Cardiac septum (tissue), 1 donor: ENCODE measurements at regions of chr3 and their contacts with region 1.

Region 1: DNA sequence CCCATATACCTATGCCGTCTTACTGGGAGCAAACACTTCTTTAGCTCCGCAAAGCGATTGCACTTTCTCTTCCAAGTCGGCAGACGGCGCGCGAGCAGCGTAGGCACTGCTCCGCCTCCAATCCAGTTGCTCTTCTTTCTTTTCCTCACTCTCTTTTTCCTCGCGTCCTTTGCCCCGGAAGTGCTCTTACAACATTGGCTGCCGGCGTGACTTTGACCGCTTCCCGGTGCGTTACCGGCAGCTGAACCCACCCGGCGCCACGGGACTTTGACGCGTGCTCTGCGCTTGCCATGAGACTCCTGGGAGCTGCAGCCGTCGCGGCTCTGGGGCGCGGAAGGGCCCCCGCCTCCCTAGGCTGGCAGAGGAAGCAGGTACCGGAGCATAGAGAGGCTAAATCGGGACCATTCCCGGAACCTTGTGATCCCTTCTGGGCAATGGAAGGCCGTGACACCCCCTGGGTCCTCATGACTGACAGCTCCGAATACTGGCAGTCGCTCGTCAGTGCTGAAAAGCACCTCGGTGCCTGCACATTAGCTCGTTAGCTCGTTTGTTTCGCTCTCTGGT is at the start of gene GFM1:
- DNase-seq: peak; percentile 95
- total RNA-seq, gene GFM1: 58.4 TPM

Region 2: DNA sequence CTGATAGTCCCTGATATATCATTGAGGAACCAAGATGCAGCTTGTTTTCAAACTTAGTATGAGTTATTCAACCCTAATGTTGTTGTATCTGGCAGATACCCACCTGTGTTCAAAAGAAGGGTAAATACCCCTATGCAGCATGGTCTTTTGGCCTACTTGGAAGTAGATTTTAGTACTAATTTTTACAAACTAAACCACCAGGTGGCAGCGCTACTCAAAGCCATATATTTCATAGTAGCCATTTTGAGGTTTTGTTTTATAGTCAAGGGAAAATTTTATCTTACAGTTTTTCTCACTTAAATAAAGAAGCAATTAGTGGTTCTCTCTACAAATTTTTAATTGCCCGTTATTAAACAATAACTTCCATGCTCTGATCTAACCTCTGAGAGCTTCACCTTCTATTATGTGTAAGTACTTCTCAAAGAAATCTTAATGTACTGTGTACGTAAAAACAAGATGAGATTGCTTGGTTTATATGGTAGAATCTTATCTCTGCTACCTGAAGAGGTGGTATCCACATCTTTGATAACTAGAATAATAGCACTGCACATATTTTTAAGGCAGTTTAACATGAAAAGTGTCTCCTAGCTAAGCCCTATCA is 104.9 kb before region 1 on chr3:
- intact Hi-C with region 1: loop called (anchors 10 kb)
- DNase-seq: no peak

Region 3: DNA sequence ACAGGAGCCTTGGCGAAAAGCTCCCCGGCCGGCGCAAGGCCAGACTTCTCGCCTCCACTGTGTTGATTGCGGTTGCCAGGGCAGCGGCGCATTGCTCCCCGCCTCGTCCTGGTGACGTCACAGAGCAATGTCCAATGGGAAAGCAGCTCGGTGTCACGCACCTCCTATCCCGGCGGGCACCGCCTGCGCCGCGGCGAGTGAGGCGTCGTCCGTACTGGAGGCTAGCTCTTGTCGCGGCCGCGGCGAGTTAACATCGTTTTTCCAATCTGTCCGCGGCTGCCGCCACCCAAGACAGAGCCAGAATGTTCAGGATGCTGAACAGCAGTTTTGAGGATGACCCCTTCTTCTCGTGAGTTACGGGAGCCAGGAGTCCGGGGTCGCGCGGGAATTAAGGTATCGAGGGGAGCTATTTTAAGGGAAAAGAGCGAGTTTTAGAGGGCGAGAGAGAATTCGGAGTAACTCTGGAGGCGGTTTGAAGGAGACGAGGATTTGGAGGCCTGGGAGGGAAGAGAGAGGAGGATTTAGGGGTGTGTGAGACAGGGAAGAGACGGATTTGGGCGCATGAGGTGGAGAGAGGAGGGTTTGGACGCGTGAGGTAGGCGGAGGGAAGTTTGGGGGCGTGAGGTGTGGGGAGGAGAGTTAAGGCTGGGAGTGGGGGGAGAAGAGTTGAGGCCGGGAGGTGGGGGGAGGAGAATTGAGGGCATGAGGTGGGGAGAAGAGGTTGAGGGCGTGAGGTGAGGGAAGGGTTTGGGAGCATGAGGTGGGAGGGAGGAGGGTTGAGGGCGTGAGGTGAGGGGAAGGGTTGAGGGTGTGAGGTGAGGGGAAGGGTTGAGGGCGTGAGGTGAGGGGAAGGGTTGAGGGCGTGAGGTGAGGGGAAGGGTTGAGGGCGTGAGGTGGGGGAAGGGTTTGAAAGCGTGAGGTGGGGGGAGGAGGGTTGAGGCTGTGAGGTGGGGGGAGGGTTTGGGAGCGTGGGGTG is 73.1 kb before region 1 on chr3 and contains the start of gene MLF1:
- intact Hi-C with region 1: loop called (anchors 10 kb)
- DNase-seq: peak; percentile 98
- total RNA-seq, gene MLF1: 79.2 TPM